Aorta (tissue), 5 donors: ENCODE measurements at regions of chr11 and their contacts with region 1.

Region 1: GRCh38 chr11:124875943-124876817 is 10.9 kb downstream of the ROBO3 start:
- DNase-seq: peak; percentile 91 to 95
- ATAC-seq: peak; percentile 94
- H3K4me3 ChIP-seq: peak overlapping the region; percentile 15 to 49
- H3K27ac ChIP-seq: peak overlapping the region in 1 of 2 donors; percentile 6
- H3K4me1 ChIP-seq: no peaks in the 10 kb centered on the region
- H3K27me3 ChIP-seq: no peaks in the 10 kb centered on the region

Region 2: DNA sequence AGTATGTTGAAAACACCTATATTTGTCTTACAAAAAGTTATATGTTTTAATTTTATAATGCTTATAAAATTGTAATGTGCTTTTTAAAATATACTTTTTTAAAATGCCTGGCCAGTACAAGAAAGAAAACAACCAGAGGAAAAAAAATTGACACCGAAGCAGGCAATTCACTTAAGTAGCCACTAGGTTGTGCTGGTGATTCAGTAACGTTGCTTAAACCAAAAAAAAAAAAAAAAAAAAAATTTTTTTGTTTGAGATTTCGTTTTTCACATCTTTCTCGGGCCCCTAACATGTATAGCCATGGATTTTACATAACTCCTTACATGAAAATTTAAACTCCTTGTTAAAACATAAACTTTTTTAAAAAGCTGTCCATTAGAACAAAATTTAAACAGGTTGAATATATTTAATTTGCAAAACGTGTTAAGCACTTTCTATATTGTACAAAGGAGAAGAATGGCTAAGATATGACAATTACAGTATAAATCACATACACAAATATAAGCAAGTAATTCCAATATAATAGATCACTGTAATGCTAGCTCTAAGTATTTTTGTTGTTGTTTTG is 460.7 kb before region 1 on chr11:
- intact Hi-C with region 1: loop called in 1 of 2 experiments (anchors 10 kb)
- DNase-seq: no peak
- ATAC-seq: no peak
- H3K4me3 ChIP-seq: no peak overlapping the region
- H3K27ac ChIP-seq: no peak overlapping the region
- H3K4me1 ChIP-seq: no peaks in the 10 kb centered on the region
- H3K27me3 ChIP-seq: no peaks in the 10 kb centered on the region

Region 3: GRCh38 chr11:124800226-124800929 is 75.8 kb before region 1 on chr11 and contains the start of gene MSANTD2:
- intact Hi-C with region 1: no loop called
- DNase-seq: peak; percentile 90 to 94
- ATAC-seq: peak; percentile 97
- H3K4me3 ChIP-seq: peak within 1 kb of the TSS; percentile 95 to 97
- H3K27ac ChIP-seq: peak within 1 kb of the TSS; percentile 77 to 99
- H3K4me1 ChIP-seq: peaks cover 1 to 6% of the 10 kb centered on the region in 2 donors
- H3K27me3 ChIP-seq: no peaks in the 10 kb centered on the region
- total RNA-seq, gene MSANTD2: 21.5 to 23.6 TPM